PC-9 (cell line): ENCODE measurements at regions of chr15 and their contacts with region 1.

Region 1: GRCh38 chr15:58616171-58616570 is 133.3 kb downstream of the ADAM10 start:
- DNase-seq: no peak
- H3K4me3 ChIP-seq: no peak overlapping the region
- H3K27ac ChIP-seq: no peak overlapping the region
- H3K4me1 ChIP-seq: no peaks in the 10 kb centered on the region
- H3K27me3 ChIP-seq: no peaks in the 10 kb centered on the region
- CTCF ChIP-seq: no peak

Region 2: DNA sequence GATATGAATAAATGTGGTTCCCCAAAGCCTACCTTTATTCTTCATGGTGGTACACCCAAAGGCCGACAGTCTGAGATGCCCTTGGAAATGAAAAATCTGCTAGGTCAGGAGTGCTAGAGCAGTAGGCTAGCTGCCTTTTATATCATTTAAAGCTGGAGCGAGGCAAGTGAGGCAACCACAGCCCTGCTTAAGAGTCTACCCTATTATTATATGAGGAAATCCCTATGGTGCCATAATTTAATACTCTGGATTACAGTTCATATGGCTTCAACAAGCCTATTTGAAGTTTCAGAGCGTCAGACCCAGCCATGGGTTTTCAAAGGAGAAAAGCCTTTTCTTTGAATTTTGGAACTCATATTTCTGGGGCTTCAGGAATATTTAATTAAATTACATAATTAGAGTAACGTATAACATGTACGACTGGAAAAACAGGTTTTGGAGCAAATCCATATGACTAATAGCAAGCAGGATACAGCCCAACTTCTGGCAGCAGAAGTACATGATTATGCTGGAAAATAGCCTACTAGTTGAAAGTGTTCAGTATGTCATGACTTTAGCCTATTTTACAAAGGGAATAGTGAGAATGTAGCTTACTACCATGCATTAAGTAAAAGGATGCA is 335.3 kb after region 1 on chr15:
- CTCF ChIA-PET with region 1: interaction called, 15 read pairs
- POLR2A ChIA-PET with region 1: no interaction called
- intact Hi-C with region 1: no loop called
- DNase-seq: peak; percentile 30 to 83
- H3K4me3 ChIP-seq: peak overlapping the region; percentile 35; the same call in 1 of the 2 replicates
- H3K27ac ChIP-seq: peak overlapping the region; percentile 97
- H3K4me1 ChIP-seq: peaks cover 52% of the 10 kb centered on the region
- H3K27me3 ChIP-seq: no peaks in the 10 kb centered on the region
- CTCF ChIP-seq: no peak

Region 3: GRCh38 chr15:59611276-59612260 is 995.4 kb after region 1 on chr15 and contains the start of gene GCNT3:
- CTCF ChIA-PET with region 1: interaction called, 13 read pairs
- POLR2A ChIA-PET with region 1: no interaction called
- intact Hi-C with region 1: no loop called
- DNase-seq: peak in 1 of 2 experiments; percentile 60
- H3K4me3 ChIP-seq: no peak within 1 kb of the TSS; the same call in 1 of the 2 replicates
- H3K27ac ChIP-seq: peak within 1 kb of the TSS; percentile 75
- H3K4me1 ChIP-seq: peaks cover 28% of the 10 kb centered on the region
- H3K27me3 ChIP-seq: no peaks in the 10 kb centered on the region
- CTCF ChIP-seq: no peak
- total RNA-seq, gene GCNT3: 0.52 and 0.80 TPM in 2 replicates